Heart right ventricle (tissue), 16 donors: ENCODE measurements at regions of chr5 and their contacts with region 1.

Region 1: GRCh38 chr5:172188033-172188892 is at the start of gene STK10:
- DNase-seq: peak; percentile 92 to 95
- ATAC-seq: peak; percentile 93 to 98 (median 96)
- H3K4me3 ChIP-seq: peak within 1 kb of the TSS; percentile 76 to 100 (median 96)
- H3K27ac ChIP-seq: peak within 1 kb of the TSS; percentile 66 to 99 (median 96)
- H3K4me1 ChIP-seq: peaks cover 0 to 44% (median 35%) of the 10 kb centered on the region in 9 donors
- H3K27me3 ChIP-seq: no peaks in the 10 kb centered on the region
- CTCF ChIP-seq: peak; percentile 82 to 98 (median 91)
- total RNA-seq, gene STK10: 5.6 to 22.3 (median 9.8) TPM

Region 2: GRCh38 chr5:171984748-171985419 is 203.4 kb before region 1 on chr5:
- intact Hi-C with region 1: no loop called
- DNase-seq: no peak
- ATAC-seq: no peak
- H3K4me3 ChIP-seq: no peak overlapping the region
- H3K27ac ChIP-seq: no peak overlapping the region
- H3K4me1 ChIP-seq: peaks cover 0 to 46% (median 22%) of the 10 kb centered on the region in 9 donors
- H3K27me3 ChIP-seq: no peaks in the 10 kb centered on the region
- CTCF ChIP-seq: no peak

Region 3: DNA sequence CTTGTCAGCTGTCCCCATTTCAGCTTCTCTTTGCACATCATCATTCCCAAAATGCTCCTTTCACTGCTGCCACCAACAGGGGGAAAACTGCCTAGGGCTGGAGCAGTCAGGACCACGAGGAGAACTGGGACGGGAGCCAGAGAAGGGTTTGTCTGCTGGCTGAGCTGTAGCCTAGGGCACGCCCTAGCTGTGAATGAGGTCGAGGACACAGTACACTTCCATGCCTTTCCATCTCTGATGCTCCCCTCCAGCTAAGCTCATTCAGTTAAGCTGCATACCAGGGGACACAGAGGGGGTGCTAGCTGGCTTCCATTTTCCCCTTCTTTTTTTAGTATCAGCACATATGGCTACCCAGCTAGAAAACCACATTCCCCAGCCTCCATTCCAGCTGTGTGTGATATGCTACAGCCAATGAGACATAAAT is 65.0 kb before region 1 on chr5:
- intact Hi-C with region 1: loop called in 1 of 10 experiments (anchors 5 kb)
- DNase-seq: peak; percentile 69 to 90
- ATAC-seq: peak; percentile 91 to 97 (median 94)
- H3K4me3 ChIP-seq: no peak overlapping the region
- H3K27ac ChIP-seq: no peak overlapping the region
- H3K4me1 ChIP-seq: peaks cover 6 to 36% (median 23%) of the 10 kb centered on the region in 9 donors
- H3K27me3 ChIP-seq: no peaks in the 10 kb centered on the region
- CTCF ChIP-seq: peak; percentile 20 to 67 (median 47)

Region 4: GRCh38 chr5:172144291-172144815 is 43.9 kb before region 1 on chr5:
- intact Hi-C with region 1: loop called in 1 of 10 experiments (anchors 5 kb)
- DNase-seq: peak; percentile 53
- ATAC-seq: peak; percentile 65 to 85 (median 78)
- H3K4me3 ChIP-seq: no peak overlapping the region
- H3K27ac ChIP-seq: peak overlapping the region in 5 of 10 donors; percentile 23 to 49 (median 39)
- H3K4me1 ChIP-seq: peaks cover 0 to 52% (median 35%) of the 10 kb centered on the region in 9 donors
- H3K27me3 ChIP-seq: no peaks in the 10 kb centered on the region
- CTCF ChIP-seq: no peak